Lower leg skin (tissue), 4 donors: ENCODE measurements at regions of chr11 and their contacts with region 1.

Region 1: GRCh38 chr11:78902771-78903507 is 328.3 kb upstream of the NARS2 start:
- DNase-seq: no peak
- H3K4me3 ChIP-seq: no peak overlapping the region
- CTCF ChIP-seq: no peak
- POLR2A ChIP-seq: no peak

Region 2: DNA sequence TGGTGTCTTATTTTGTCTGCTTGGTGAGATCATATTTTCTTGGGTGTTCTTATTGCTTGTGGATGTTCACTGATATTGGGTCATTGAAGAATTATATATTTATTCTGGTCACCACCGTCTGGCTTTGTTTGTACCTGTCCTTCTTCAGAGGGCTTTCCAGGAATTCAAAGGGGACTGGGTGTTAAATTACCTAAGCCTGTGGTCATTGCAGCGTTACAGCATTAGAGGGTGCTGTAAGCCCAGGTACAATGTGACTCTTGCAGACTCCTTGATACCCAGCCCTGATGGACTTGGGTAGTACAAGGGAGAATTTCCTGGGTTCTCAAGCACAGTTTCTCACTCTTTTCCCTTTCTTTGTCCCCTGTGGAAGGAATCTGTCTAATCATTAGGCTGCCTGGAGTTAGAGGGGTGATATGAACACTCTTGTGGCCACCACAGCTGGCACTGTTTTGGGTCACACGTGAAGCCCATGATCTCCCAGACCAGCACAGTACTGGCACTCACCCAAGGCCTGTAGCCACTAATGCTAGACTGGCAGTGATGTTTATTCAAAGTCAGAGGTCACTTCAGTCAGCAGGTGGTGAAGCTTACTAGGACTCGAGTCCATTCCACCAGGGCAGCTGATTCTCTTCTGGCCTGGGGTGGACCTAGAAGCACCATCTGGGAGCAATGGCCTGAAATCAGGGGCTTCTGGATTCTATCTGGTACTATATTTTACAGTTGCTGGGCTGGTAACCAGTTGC is 272.2 kb before region 1 on chr11:
- intact Hi-C with region 1: no loop called
- DNase-seq: no peak
- H3K4me3 ChIP-seq: no peak overlapping the region
- CTCF ChIP-seq: no peak
- POLR2A ChIP-seq: no peak

Region 3: DNA sequence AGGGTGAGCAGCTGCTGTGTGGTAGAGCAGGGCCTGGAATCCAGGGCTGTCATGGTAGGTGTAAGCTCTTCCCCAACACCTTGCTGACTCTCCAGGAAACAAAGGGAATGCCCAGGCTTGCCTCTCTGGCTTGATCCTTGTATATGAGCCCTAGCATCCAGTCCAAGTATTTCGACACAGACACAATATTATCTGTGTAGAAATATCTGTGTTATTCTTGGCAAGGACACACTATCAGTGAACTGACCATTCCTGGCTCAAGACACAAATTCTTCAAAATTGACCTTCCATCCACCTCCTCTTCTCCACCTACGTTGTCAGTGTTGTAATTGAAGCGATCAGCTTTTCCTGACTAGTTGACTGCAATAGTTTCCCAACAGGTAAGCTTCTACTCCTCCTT is 16.3 kb before region 1 on chr11:
- intact Hi-C with region 1: loop called (anchors 1 kb)
- DNase-seq: no peak
- H3K4me3 ChIP-seq: no peak overlapping the region
- CTCF ChIP-seq: no peak
- POLR2A ChIP-seq: no peak

Region 4: DNA sequence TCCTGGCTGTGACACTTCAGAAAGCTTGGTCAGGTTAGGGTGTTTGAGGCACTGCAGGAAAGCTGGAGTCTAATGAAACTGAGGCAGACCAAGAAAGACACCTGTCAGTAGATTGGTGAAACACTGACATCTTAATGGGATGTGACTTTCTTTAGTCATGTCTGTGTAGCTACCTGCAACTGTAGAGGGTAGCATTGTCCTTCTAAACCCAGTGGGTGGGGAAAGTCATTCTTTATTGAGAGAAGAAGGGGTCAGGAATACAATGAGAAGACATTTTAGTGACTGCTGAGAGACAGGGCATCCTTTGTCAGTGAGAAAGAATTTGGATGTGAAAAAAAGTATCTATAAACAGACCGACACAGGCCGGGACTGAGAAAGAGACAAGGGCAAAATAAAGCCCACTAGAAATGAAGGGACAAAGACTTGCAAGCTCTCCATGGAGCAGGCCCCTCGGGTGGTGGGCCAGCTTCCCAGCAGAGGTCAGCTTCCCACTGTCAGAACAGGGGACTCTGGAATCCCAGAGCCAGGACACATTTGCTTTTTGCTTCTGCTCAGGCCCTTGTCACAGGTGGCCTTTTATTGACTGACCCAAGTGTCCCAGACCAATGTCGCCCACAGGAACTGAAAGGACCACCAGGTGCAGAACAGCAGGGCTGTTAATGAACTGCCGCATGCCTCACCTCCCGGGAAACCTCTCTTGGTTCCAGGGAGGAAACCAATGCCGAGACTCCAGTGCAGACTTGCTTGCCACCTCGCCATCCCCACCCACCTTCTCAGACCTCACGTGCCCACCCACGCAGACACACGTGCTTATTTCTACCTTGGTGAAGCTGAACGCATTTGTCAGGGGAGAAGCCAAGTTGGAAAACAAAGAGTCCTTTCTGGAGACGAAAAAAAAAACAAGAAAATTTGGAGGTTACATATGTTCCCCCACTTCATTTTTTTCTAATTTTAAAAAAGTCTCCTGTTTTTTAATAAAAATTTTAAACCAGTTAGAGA is 325.1 kb after region 1 on chr11:
- intact Hi-C with region 1: no loop called
- DNase-seq: peak in 1 of 2 donors; percentile 63
- H3K4me3 ChIP-seq: no peak overlapping the region
- CTCF ChIP-seq: no peak
- POLR2A ChIP-seq: no peak